AG04449 (cell line): ENCODE measurements at regions of chr6 and their contacts with region 1.

Region 1: GRCh38 chr6:11496152-11497060 is 41.1 kb upstream of the TMEM170B start:
- DNase-seq: peak; percentile 37
- H3K4me3 ChIP-seq: no peak overlapping the region
- CTCF ChIP-seq: peak; percentile 68

Region 2: GRCh38 chr6:11085758-11086435 is 410.5 kb before region 1 on chr6:
- CTCF ChIA-PET with region 1: interaction called, 22 read pairs
- POLR2A ChIA-PET with region 1: no interaction called
- DNase-seq: peak; percentile 54
- H3K4me3 ChIP-seq: no peak overlapping the region
- CTCF ChIP-seq: no peak

Region 3: GRCh38 chr6:11126876-11127275 is 369.5 kb before region 1 on chr6:
- CTCF ChIA-PET with region 1: interaction called, 13 read pairs
- POLR2A ChIA-PET with region 1: no interaction called
- DNase-seq: no peak
- H3K4me3 ChIP-seq: no peak overlapping the region
- CTCF ChIP-seq: no peak

Region 4: GRCh38 chr6:11161031-11161966 is 335.1 kb before region 1 on chr6:
- CTCF ChIA-PET with region 1: interaction called, 115 read pairs
- POLR2A ChIA-PET with region 1: no interaction called
- DNase-seq: no peak
- H3K4me3 ChIP-seq: no peak overlapping the region
- CTCF ChIP-seq: no peak

Region 5: GRCh38 chr6:11198663-11199603 is 297.5 kb before region 1 on chr6:
- CTCF ChIA-PET with region 1: interaction called, 17 read pairs
- POLR2A ChIA-PET with region 1: no interaction called
- DNase-seq: no peak
- H3K4me3 ChIP-seq: no peak overlapping the region
- CTCF ChIP-seq: no peak

Region 6: GRCh38 chr6:11277275-11278206 is 218.9 kb before region 1 on chr6:
- CTCF ChIA-PET with region 1: interaction called, 15 read pairs
- POLR2A ChIA-PET with region 1: no interaction called
- DNase-seq: peak; percentile 72
- H3K4me3 ChIP-seq: no peak overlapping the region
- CTCF ChIP-seq: no peak

Region 7: DNA sequence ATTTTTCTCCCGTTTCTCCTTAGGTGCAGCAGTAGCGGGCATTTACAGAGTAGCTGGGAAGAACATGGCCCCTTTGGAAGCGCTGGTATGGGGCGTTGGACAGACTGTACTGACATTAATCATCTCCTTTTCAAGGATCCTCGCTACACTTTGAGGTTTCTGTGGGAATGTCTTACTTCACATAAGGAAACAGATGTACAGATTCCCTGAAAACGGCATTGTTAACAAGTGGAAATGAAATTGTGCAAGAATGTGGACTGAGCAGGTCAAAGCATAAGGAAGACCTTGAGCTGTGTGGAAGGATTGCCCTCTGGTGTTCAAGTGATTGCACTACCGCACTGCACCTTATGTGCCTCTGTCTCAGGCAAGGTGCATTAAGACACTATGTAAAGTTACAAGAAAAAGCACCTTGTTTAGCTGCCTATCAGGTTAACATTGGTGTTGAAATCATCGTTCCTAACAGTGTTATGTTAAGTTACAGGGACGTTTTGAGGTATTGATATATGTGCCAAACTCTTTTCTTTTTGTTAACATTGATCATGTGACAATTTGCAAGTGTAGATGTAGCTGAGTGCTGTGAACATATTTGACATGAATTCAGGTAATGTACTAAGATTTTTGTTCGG is 79.1 kb after region 1 on chr6:
- CTCF ChIA-PET with region 1: interaction called, 11 read pairs
- POLR2A ChIA-PET with region 1: no interaction called
- DNase-seq: peak; percentile 41
- H3K4me3 ChIP-seq: no peak overlapping the region
- CTCF ChIP-seq: peak; percentile 90